ENCODE measurements at regions of chr13 and their contacts with region 1.

Region 1: DNA sequence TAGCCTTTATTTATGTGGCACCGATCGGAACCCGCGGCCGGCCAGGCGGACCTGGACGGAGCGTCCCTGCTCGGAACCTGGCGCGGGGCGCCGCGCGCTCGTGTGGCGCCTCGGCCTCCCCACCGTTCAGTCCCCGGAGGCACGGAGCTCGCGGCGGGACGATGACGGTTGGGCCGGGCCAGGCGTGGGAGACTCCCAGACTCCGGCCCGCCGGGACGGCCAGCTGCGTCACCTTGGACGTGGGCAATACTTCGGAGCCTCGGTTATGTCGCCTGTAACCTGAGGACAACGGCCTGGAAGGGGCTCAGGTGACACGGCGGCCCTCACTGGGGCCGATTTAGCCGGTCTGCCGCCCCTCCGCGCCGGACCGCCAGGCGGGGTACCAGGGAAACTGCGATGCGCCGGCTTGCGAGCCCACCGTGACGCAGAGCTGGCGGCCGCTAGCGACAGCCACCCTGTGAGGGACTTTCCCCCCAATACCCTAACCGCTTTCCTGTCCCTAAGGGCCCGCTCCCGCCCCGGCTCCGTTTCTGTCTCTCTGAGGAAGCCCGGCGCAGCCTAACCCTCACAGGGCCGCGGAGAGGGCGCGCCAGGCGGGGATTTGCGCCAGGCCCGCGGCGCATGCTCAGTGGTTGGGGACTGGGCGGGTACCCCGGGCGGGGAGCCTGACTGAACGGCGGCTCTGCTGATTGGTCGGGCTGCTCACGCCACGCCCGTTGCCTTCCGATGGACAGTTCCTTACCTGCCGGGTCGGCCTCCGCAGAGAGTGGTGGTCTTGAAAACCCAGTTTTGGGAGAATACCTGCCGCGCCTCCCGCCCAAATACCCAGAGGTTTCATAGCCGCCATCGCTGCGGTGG is 109.5 kb upstream of the DOCK9 start:
- DNase-seq: peak; percentile 95
- H3K4me3 Mint-ChIP-seq: peak overlapping the region; percentile 86
- H3K27ac Mint-ChIP-seq: peak overlapping the region; percentile 99
- H3K4me1 Mint-ChIP-seq: peaks cover 46% of the 10 kb centered on the region
- H3K27me3 Mint-ChIP-seq: no peaks in the 10 kb centered on the region

Region 2: DNA sequence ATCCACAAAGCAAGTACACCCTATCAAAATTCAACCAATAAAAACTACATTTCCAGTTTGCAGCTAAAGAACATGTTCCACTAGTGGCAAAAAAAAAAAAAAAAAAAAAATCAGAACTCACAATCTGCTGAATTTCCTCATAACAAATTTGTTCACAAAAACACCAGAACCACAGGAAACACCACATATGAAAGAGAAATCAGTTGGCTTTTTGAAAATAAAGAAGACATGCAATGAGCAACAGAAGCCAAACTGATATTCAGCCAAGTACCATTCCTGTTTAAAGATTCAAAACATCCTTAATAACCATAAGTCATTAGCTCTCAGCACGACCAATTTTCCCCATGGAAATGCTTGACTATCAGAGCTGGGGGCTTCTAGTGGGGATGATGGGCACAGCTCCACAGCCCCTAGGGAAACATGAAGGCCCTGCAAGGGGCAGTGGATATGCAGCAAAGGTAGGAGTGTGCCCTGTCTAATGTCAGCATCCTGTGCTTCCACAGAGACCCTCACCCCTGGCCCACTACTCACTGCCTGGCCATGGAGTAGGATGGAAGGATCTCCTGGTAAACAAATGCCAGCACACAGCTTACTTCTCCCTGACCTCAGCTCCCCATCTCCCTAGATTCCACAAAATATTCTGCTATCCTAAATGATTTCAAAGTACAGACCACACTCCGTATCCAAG is 35.4 kb before region 1 on chr13:
- CTCF ChIA-PET with region 1: interaction called, 10 read pairs
- DNase-seq: no peak
- H3K4me3 Mint-ChIP-seq: peak overlapping the region; percentile 69
- H3K27ac Mint-ChIP-seq: peak overlapping the region; percentile 99
- H3K4me1 Mint-ChIP-seq: peaks cover 92% of the 10 kb centered on the region
- H3K27me3 Mint-ChIP-seq: no peaks in the 10 kb centered on the region

Region 3: DNA sequence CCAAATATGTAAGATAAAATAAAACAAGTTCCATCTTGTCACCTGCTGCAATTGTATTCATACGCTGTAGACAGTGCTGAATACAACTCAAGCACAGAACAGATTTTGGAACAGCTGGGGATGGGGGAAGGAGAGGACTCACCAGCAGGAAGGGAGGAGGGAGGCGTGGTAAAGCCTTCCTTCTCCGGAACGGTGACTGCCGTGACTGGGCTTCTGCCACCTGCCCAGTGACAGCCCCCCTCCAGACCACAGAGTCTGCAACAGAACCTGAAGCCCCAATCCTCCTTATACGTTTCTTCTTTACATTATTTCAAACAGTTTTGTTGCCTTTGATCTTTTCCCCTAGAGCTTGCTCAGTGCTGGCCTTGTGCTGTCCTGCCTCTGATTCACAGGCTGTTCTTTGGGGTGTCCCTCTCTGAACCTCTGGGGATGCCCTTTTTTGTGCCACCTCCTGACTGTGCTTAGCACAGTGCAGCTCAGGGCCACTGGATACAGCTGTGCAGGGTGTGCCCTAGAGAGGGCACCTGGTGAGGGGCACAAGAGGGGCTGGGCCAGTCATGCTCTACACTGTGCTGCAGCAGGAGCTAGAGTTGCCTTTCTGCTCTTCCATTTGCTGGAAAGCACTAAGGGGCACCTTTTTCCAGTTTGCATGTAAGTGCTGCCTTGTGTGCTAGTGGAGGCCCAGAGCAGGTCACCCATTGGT is 671.3 kb after region 1 on chr13:
- CTCF ChIA-PET with region 1: no interaction called
- DNase-seq: no peak
- H3K4me3 Mint-ChIP-seq: no peak overlapping the region
- H3K27ac Mint-ChIP-seq: no peak overlapping the region
- H3K4me1 Mint-ChIP-seq: no peaks in the 10 kb centered on the region
- H3K27me3 Mint-ChIP-seq: no peaks in the 10 kb centered on the region